MCF 10A (cell line): ENCODE measurements at regions of chr2 and their contacts with region 1.

Region 1: GRCh38 chr2:30165050-30165520 is 18.3 kb downstream of the YPEL5 start:
- DNase-seq: peak; percentile 90
- H3K4me3 Mint-ChIP-seq: no peak overlapping the region
- H3K27ac Mint-ChIP-seq: no peak overlapping the region
- H3K4me1 Mint-ChIP-seq: peaks cover 31% of the 10 kb centered on the region
- H3K27me3 Mint-ChIP-seq: no peaks in the 10 kb centered on the region
- CTCF ChIP-seq: peak; percentile 59

Region 2: DNA sequence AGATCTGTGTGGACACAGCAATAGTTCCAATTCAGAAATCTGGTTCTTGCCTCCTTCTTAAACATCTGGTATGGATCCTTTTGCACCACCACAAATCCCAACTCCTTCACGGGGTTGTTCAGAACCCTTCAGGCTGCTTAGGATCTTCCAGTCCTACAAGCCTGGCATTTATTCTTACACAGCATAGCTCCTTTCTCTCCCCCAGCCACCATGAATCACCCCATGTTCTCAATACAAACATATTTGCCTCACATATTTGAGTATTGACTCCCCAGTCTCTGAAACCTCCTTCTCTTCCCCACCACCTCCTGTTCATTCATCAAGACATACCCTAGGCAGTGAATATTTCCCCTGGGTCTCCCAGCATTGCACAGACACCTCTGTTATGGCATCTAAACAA is 398.9 kb before region 1 on chr2:
- CTCF ChIA-PET with region 1: no interaction called
- POLR2A ChIA-PET with region 1: no interaction called
- intact Hi-C with region 1: no loop called
- DNase-seq: no peak
- H3K4me3 Mint-ChIP-seq: no peak overlapping the region
- H3K27ac Mint-ChIP-seq: no peak overlapping the region
- H3K4me1 Mint-ChIP-seq: peaks cover 7% of the 10 kb centered on the region
- H3K27me3 Mint-ChIP-seq: peaks cover 9% of the 10 kb centered on the region
- CTCF ChIP-seq: no peak

Region 3: GRCh38 chr2:30089171-30089570 is 75.9 kb before region 1 on chr2:
- CTCF ChIA-PET with region 1: interaction called, 23 read pairs
- POLR2A ChIA-PET with region 1: no interaction called
- intact Hi-C with region 1: loop called (anchors 2 kb)
- DNase-seq: no peak
- H3K4me3 Mint-ChIP-seq: no peak overlapping the region
- H3K27ac Mint-ChIP-seq: no peak overlapping the region
- H3K4me1 Mint-ChIP-seq: no peaks in the 10 kb centered on the region
- H3K27me3 Mint-ChIP-seq: peaks cover 53% of the 10 kb centered on the region
- CTCF ChIP-seq: no peak

Region 4: GRCh38 chr2:30127016-30127893 is 37.8 kb before region 1 on chr2:
- CTCF ChIA-PET with region 1: no interaction called
- POLR2A ChIA-PET with region 1: no interaction called
- intact Hi-C with region 1: no loop called
- DNase-seq: peak; percentile 37
- H3K4me3 Mint-ChIP-seq: no peak overlapping the region
- H3K27ac Mint-ChIP-seq: peak overlapping the region; percentile 31
- H3K4me1 Mint-ChIP-seq: peaks cover 8% of the 10 kb centered on the region
- H3K27me3 Mint-ChIP-seq: no peaks in the 10 kb centered on the region
- CTCF ChIP-seq: no peak

Region 5: GRCh38 chr2:30178618-30179434 is 13.7 kb after region 1 on chr2:
- CTCF ChIA-PET with region 1: interaction called, 77 read pairs
- POLR2A ChIA-PET with region 1: interaction called, 16 read pairs
- intact Hi-C with region 1: no loop called
- DNase-seq: peak; percentile 96
- H3K4me3 Mint-ChIP-seq: no peak overlapping the region
- H3K27ac Mint-ChIP-seq: peak overlapping the region; percentile 87
- H3K4me1 Mint-ChIP-seq: peaks cover 28% of the 10 kb centered on the region
- H3K27me3 Mint-ChIP-seq: no peaks in the 10 kb centered on the region
- CTCF ChIP-seq: no peak

Region 6: DNA sequence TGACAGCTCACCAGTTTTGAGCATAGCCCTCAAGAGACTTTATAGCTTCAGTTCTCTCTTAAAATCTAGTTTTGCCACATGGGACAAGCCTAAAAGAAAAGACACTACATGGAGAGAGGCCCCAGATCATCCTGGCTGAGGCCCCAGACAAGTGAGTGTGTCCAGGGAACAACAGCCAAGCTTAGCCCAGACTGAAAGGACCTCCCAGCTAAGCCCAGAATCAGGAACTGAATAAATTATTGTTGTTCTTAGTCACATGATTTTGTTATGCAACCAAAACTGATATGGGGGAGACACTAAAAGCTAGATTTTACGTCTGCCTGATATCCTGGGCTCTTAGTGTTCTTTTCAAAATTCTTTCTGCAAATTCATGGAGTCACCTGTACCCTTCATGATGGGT is 36.9 kb after region 1 on chr2:
- CTCF ChIA-PET with region 1: interaction called, 206 read pairs
- POLR2A ChIA-PET with region 1: interaction called, 36 read pairs
- intact Hi-C with region 1: no loop called
- DNase-seq: no peak
- H3K4me3 Mint-ChIP-seq: no peak overlapping the region
- H3K27ac Mint-ChIP-seq: no peak overlapping the region
- H3K4me1 Mint-ChIP-seq: peaks cover 11% of the 10 kb centered on the region
- H3K27me3 Mint-ChIP-seq: no peaks in the 10 kb centered on the region
- CTCF ChIP-seq: no peak

Region 7: DNA sequence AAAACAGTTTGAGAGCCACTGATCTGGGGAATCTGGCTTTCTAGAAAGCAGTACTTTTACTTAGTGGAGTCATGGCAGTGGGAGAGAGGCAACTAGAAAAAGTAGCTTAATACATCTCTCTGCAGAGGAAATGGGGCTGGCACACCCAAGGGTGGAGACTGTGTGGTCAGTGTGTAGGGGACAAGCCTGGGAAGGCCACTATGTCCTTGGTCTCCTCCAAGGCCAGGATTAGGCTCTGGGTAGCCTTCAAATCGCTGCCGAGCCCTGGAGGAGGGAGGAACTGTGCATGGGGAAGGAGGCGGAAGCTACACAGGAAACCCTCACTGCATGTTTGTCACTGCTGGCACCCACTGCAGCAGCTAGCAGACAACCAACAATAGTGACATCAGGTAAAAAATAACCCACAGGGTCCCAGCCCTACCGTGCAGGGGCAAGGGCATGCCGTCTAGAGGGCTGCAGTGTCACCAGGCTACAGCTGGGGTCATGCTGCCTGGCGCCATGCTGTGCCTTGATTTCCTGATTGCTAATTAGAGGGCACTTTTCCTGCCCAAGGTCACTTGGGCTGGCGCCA is 101.1 kb after region 1 on chr2:
- CTCF ChIA-PET with region 1: interaction called, 11 read pairs
- POLR2A ChIA-PET with region 1: no interaction called
- intact Hi-C with region 1: no loop called
- DNase-seq: peak; percentile 5
- H3K4me3 Mint-ChIP-seq: peak overlapping the region; percentile 37
- H3K27ac Mint-ChIP-seq: peak overlapping the region; percentile 57
- H3K4me1 Mint-ChIP-seq: peaks cover 17% of the 10 kb centered on the region
- H3K27me3 Mint-ChIP-seq: no peaks in the 10 kb centered on the region
- CTCF ChIP-seq: no peak

Region 8: GRCh38 chr2:30324245-30324908 is 159.3 kb after region 1 on chr2:
- CTCF ChIA-PET with region 1: no interaction called
- POLR2A ChIA-PET with region 1: no interaction called
- intact Hi-C with region 1: no loop called
- DNase-seq: no peak
- H3K4me3 Mint-ChIP-seq: no peak overlapping the region
- H3K27ac Mint-ChIP-seq: no peak overlapping the region
- H3K4me1 Mint-ChIP-seq: no peaks in the 10 kb centered on the region
- H3K27me3 Mint-ChIP-seq: peaks cover 6% of the 10 kb centered on the region
- CTCF ChIP-seq: no peak

Region 9: GRCh38 chr2:30711646-30712085 is 546.6 kb after region 1 on chr2:
- CTCF ChIA-PET with region 1: interaction called, 413 read pairs
- POLR2A ChIA-PET with region 1: interaction called, 8 read pairs
- intact Hi-C with region 1: loop called (anchors 1 kb)
- DNase-seq: peak; percentile 91
- H3K4me3 Mint-ChIP-seq: no peak overlapping the region
- H3K27ac Mint-ChIP-seq: no peak overlapping the region
- H3K4me1 Mint-ChIP-seq: peaks cover 9% of the 10 kb centered on the region
- H3K27me3 Mint-ChIP-seq: no peaks in the 10 kb centered on the region
- CTCF ChIP-seq: peak; percentile 100